ENCODE measurements at regions of chr20 and their contacts with region 1.

Region 1: DNA sequence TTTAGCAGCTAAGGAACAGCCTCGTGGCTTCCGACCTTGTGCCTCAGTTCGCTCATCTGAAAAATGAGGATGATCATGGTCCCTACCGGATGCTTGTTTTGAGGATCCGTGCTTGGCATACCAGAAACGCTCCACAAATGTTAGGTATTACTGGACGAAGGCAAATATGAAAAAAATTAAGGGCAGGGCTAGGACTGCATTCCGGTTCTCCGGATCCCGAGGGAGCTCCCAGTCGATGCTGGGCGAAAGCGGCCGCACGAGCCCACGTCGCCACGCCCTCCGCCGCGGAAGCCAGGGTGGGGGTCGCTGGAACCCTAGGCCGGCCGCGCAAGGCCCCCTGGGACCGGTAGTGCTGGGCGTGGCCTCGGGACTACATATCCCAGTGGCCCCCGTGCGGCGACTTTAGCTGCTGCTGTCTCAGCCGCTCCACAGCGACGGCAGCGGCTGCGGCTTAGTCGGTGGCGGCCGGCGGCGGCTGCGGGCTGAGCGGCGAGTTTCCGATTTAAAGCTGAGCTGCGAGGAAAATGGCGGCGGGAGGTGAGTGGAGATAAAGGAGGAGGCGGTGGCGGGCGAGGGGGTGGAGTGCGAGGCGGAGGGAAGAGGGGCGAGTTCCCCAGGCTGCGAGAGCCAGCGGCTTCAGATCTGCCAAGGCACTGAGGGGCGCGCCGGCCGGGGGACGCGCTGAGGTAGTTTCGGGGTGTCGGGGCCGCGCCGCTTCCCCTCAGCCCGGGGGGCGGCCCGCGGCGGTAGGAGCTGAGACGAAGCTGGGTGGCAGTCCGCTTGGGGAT is at the start of gene NCOA3:
- DNase-seq: peak; percentile 89
- ATAC-seq: peak; percentile 89
- H3K4me3 Mint-ChIP-seq: peak within 1 kb of the TSS; percentile 100
- H3K27ac Mint-ChIP-seq: peak within 1 kb of the TSS; percentile 98
- H3K4me1 Mint-ChIP-seq: peaks cover 59% of the 10 kb centered on the region
- H3K27me3 Mint-ChIP-seq: no peaks in the 10 kb centered on the region
- CTCF ChIP-seq: no peak
- total RNA-seq, gene NCOA3: 186 and 187 TPM in 2 replicates

Region 2: DNA sequence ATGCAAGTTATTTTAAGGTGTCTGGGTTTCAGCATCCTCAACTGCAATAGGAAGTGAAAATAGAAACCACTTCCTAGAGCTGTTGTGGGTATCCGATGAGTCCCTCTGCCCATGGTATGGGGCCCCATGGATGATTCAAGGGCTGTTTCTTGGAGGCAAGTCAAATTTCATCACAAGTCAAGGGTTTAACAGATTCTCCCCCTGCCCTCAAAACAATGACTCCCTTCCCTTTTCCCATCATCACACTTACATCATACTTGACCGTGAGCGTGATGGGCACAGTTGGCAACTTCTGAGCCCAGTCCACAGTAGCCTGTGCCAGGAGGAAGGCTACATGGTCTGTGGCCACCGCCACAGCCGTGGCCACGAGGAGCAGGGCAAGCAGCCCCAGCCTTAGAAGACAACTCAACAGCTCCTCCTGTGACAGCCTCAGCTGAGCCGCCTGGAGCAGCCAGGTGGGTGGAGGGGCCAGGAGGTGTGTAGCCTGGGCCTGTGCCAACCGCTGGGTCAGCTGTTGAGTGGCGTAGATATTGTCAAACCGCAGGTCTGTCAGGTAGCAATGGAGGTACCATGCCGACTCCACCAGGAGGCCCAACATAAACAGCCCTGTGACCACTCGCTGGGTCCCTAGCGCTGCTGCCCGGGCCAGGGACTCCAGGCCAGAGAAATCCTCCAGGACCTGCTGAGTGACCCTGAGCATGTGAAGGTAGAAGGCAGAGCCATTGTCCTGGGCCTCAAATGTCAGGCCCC is 956.4 kb before region 1 on chr20:
- CTCF ChIA-PET with region 1: no interaction called
- POLR2A ChIA-PET with region 1: no interaction called
- intact Hi-C with region 1: no loop called
- DNase-seq: no peak
- ATAC-seq: no peak
- H3K4me3 Mint-ChIP-seq: no peak overlapping the region
- H3K27ac Mint-ChIP-seq: no peak overlapping the region
- H3K4me1 Mint-ChIP-seq: peaks cover 8% of the 10 kb centered on the region
- H3K27me3 Mint-ChIP-seq: peaks cover 4% of the 10 kb centered on the region
- CTCF ChIP-seq: no peak

Region 3: GRCh38 chr20:47356526-47357295 is 145.0 kb before region 1 on chr20 and contains the start of gene ZMYND8:
- CTCF ChIA-PET with region 1: no interaction called
- POLR2A ChIA-PET with region 1: interaction called, 10 read pairs
- intact Hi-C with region 1: no loop called
- DNase-seq: peak; percentile 96
- ATAC-seq: peak; percentile 81
- H3K4me3 Mint-ChIP-seq: no peak within 1 kb of the TSS
- H3K27ac Mint-ChIP-seq: no peak within 1 kb of the TSS
- H3K4me1 Mint-ChIP-seq: peaks cover 55% of the 10 kb centered on the region
- H3K27me3 Mint-ChIP-seq: no peaks in the 10 kb centered on the region
- CTCF ChIP-seq: no peak
- total RNA-seq, gene ZMYND8: 42.6 and 44.7 TPM in 2 replicates

Region 4: DNA sequence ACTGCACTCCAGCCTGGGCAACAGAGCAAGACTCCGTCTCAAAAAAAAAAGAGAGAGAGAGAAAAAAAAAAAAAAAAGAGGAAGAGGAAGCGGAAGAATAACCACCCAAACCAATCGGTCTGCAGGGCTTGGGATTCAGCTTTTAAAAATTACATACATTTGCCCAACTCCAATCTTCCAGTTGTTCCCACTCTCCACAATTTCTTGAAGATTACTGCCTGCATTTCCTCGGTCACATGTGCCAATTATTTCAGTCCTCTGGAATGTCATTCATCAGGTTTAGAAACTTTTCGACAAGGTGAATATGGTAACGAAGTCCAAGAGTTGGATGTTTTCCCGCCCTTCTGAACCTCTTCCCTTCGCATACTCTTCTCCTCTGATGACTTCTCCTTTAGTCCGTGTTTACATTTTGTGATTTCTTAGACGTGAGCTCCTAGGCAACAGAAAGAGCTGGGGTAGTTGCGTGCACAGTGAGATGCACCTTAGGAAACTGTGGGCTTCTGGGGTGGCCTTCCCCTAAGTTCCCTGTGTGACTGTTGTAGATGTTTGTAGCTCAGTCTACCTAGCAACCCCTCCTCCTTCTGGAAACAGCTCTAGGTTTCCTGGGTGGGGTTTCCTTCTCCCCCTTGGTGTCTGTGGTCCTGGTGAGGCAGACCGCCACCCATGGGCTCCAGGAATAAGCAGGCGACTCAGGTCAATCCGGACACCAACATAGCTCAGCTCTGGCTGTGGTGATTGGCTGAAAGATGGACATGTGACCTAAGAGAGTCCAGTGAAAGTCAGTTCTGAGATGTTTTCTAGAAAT is 62.9 kb before region 1 on chr20:
- CTCF ChIA-PET with region 1: interaction called, 7 read pairs
- POLR2A ChIA-PET with region 1: interaction called, 63 read pairs
- intact Hi-C with region 1: loop called (anchors 1 kb)
- DNase-seq: peak; percentile 30
- ATAC-seq: peak; percentile 68
- H3K4me3 Mint-ChIP-seq: peak overlapping the region; percentile 42
- H3K27ac Mint-ChIP-seq: peak overlapping the region; percentile 91
- H3K4me1 Mint-ChIP-seq: peaks cover 52% of the 10 kb centered on the region
- H3K27me3 Mint-ChIP-seq: no peaks in the 10 kb centered on the region
- CTCF ChIP-seq: no peak

Region 5: GRCh38 chr20:47468290-47469050 is 33.2 kb before region 1 on chr20:
- CTCF ChIA-PET with region 1: interaction called, 5 read pairs
- POLR2A ChIA-PET with region 1: interaction called, 75 read pairs
- intact Hi-C with region 1: loop called (anchors 1 kb)
- DNase-seq: peak; percentile 35
- ATAC-seq: peak; percentile 80
- H3K4me3 Mint-ChIP-seq: peak overlapping the region; percentile 50
- H3K27ac Mint-ChIP-seq: peak overlapping the region; percentile 94
- H3K4me1 Mint-ChIP-seq: peaks cover 64% of the 10 kb centered on the region
- H3K27me3 Mint-ChIP-seq: no peaks in the 10 kb centered on the region
- CTCF ChIP-seq: no peak

Region 6: DNA sequence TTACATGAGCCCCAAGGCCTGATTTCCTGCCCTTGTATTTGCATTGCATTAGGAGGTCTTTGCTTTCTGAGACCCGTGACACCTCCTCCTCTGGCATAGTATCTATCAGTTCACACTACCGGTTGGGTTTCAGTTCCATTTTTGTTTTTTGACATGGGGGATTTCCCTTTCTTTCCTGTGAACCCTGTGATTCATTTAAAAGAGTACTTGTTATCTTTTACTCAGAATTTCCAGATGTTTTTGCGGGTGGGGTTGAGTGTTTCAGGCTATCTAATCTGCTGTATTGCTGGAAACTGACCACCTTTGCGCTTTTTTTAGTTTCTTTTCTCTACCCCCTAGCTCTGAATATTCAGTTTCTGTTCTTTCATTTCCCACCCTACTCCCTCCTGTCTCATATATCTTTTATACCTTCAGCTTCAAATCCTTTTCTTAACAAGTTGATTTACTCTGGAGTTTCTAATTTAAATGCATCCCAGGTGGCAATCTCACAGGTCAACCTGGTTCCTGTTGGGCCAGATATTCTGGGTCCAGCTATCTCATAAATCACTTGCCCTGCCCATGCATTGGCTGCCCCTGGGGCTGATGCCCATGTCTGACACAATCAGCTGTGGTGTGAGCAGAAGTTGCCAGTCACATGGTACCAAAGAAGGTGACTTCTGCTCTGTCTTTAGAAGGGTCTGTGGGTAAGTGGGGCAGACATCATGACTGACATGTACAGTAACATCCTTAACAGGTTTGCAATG is 14.3 kb before region 1 on chr20:
- CTCF ChIA-PET with region 1: interaction called, 6 read pairs
- POLR2A ChIA-PET with region 1: interaction called, 295 read pairs
- intact Hi-C with region 1: loop called (anchors 1 kb)
- DNase-seq: peak; percentile 42
- ATAC-seq: peak; percentile 77
- H3K4me3 Mint-ChIP-seq: peak overlapping the region; percentile 72
- H3K27ac Mint-ChIP-seq: peak overlapping the region; percentile 97
- H3K4me1 Mint-ChIP-seq: peaks cover 79% of the 10 kb centered on the region
- H3K27me3 Mint-ChIP-seq: no peaks in the 10 kb centered on the region
- CTCF ChIP-seq: no peak

Region 7: GRCh38 chr20:47521059-47521808 is 19.6 kb after region 1 on chr20:
- CTCF ChIA-PET with region 1: no interaction called
- POLR2A ChIA-PET with region 1: interaction called, 40 read pairs
- intact Hi-C with region 1: loop called (anchors 2 kb)
- DNase-seq: no peak
- ATAC-seq: no peak
- H3K4me3 Mint-ChIP-seq: no peak overlapping the region
- H3K27ac Mint-ChIP-seq: peak overlapping the region; percentile 75
- H3K4me1 Mint-ChIP-seq: peaks cover 60% of the 10 kb centered on the region
- H3K27me3 Mint-ChIP-seq: no peaks in the 10 kb centered on the region
- CTCF ChIP-seq: no peak

Region 8: DNA sequence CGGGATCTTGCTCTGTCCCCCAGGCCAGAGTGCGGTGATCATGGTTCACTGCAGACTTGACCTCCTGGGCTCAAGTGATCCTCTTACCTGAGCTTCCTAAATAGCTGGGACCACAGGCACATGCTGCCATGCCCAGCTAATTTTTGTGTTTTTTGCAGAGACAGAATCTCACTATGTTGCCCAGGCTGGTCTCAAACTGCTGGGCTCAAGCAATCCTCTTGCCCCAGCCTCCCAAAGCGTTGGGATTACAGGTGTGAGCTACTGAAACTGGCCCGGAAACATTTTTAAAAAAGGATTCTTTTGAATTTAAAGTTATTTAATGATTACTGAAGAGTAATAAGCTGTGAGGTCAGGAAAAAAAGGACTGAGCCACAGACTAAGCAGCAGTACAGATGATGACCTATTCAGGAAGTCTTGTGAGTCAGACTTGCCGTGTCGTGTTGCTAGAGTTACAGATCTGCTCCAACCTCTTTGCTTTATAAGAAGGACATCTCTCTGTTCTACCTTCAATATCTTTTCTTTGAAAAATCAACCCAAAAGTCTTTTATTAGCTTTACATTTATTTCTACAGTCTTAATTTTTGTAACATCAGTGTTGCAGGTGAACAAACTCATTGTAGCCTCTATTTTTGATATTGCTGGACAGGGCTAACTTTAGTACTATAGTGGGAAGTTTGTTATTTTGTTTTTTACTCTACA is 108.7 kb after region 1 on chr20:
- CTCF ChIA-PET with region 1: interaction called, 3 read pairs
- POLR2A ChIA-PET with region 1: interaction called, 15 read pairs
- intact Hi-C with region 1: loop called (anchors 5 kb)
- DNase-seq: no peak
- ATAC-seq: peak; percentile 91
- H3K4me3 Mint-ChIP-seq: peak overlapping the region; percentile 65
- H3K27ac Mint-ChIP-seq: peak overlapping the region; percentile 88
- H3K4me1 Mint-ChIP-seq: peaks cover 78% of the 10 kb centered on the region
- H3K27me3 Mint-ChIP-seq: no peaks in the 10 kb centered on the region
- CTCF ChIP-seq: no peak

Region 9: GRCh38 chr20:47735412-47736400 is 234.0 kb after region 1 on chr20:
- CTCF ChIA-PET with region 1: no interaction called
- POLR2A ChIA-PET with region 1: no interaction called
- intact Hi-C with region 1: no loop called
- DNase-seq: no peak
- ATAC-seq: peak; percentile 21
- H3K4me3 Mint-ChIP-seq: no peak overlapping the region
- H3K27ac Mint-ChIP-seq: no peak overlapping the region
- H3K4me1 Mint-ChIP-seq: peaks cover 5% of the 10 kb centered on the region
- H3K27me3 Mint-ChIP-seq: peaks cover 7% of the 10 kb centered on the region
- CTCF ChIP-seq: no peak